MCF 10A (cell line): ENCODE measurements at regions of chr6 and their contacts with region 1.

Region 1: DNA sequence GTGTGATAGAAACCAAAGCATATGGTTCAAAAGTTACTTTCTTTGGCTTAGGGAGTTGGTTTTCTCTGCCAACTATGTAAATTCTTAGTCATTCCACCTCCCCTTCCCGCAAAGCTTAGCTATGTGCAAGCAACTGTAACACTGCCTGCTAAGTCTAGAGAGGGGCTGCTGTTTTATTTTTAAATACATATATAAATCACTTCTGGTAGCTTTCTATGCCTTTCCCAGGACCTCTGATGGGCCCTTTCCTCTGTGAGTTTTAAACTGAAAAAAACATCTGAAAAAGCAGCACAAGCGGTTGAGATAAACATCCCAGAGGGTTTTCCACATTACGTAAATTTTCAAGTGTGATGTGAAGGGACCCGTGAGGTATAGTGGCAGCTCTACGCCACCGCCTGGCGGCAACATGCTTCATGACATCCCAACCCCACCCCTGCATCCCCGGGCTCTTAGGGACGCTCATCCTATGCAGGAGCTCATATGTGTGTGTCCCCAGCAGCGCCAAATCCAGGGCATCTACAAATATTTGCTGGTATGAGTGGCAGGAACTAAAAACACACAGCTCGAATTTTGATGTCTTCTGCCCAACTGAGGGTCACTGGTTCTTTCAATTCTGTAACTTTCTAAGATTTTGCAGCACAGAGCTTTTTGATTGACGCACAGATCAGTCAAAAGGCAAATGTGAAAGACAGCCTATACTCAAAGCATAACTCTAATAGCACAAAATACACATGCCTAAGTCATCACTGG is 12.7 kb downstream of the SAYSD1 start:
- DNase-seq: peak; percentile 42
- H3K4me3 Mint-ChIP-seq: no peak overlapping the region
- H3K27ac Mint-ChIP-seq: no peak overlapping the region
- H3K4me1 Mint-ChIP-seq: no peaks in the 10 kb centered on the region
- H3K27me3 Mint-ChIP-seq: no peaks in the 10 kb centered on the region
- CTCF ChIP-seq: no peak

Region 2: GRCh38 chr6:38973178-38974054 is 128.8 kb before region 1 on chr6:
- CTCF ChIA-PET with region 1: interaction called, 6 read pairs
- POLR2A ChIA-PET with region 1: no interaction called
- intact Hi-C with region 1: loop called (anchors 2 kb)
- DNase-seq: peak; percentile 67
- H3K4me3 Mint-ChIP-seq: no peak overlapping the region
- H3K27ac Mint-ChIP-seq: no peak overlapping the region
- H3K4me1 Mint-ChIP-seq: peaks cover 5% of the 10 kb centered on the region
- H3K27me3 Mint-ChIP-seq: peaks cover 72% of the 10 kb centered on the region
- CTCF ChIP-seq: peak; percentile 76

Region 3: DNA sequence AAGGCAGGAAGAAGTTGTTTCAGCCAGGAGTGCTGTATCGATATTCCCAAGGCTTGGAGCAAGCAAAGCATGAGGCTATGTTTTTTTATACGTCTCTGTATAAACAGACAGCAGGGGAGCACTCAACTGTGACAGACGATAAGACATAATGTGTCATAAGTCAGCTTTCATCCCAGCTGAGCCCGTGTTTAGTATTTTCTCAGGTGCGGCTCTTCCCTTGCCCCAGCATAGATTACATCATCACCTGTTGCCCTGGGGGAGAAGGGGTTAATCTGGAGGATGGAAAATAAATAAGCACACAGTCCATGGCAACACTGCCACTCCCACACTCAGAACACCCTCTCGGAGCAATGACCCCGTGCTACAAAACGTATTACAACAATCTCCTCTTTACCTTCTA is 149.2 kb after region 1 on chr6:
- CTCF ChIA-PET with region 1: no interaction called
- POLR2A ChIA-PET with region 1: no interaction called
- intact Hi-C with region 1: no loop called
- DNase-seq: peak; percentile 30
- H3K4me3 Mint-ChIP-seq: no peak overlapping the region
- H3K27ac Mint-ChIP-seq: no peak overlapping the region
- H3K4me1 Mint-ChIP-seq: no peaks in the 10 kb centered on the region
- H3K27me3 Mint-ChIP-seq: peaks cover 19% of the 10 kb centered on the region
- CTCF ChIP-seq: no peak